Activated CD4-positive, alpha-beta memory T cell treated with anti-CD3 and anti-CD28 coated beads for 36 hours (primary cell): ENCODE measurements at regions of chr16 and their contacts with region 1.

Region 1: DNA sequence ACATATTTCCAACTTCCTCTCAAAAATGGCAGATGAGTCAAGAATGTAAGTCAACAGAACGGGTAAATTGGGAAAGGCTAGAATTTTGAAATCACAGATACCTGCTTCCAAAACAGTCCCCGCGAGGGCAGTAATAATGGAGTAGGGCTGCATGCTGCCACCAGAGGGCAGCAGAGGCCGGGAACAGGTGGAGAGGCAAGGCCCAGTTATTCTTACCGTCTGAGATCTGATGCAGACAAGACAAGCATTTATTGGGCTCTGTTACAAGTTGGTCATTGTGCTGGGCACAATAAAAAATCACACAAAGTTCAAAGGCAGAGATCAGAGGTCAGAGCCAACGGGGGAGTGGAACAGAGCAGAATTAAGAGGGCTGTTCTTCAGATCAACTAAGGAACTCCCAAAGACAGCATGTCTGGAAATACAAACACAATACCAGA is 8.8 kb upstream of the MLKL start:
- DNase-seq: peak; percentile 88
- H3K4me3 Mint-ChIP-seq: no peak overlapping the region
- H3K27ac Mint-ChIP-seq: peak overlapping the region; percentile 2
- H3K4me1 Mint-ChIP-seq: peaks cover 10% of the 10 kb centered on the region
- H3K27me3 Mint-ChIP-seq: no peaks in the 10 kb centered on the region

Region 2: DNA sequence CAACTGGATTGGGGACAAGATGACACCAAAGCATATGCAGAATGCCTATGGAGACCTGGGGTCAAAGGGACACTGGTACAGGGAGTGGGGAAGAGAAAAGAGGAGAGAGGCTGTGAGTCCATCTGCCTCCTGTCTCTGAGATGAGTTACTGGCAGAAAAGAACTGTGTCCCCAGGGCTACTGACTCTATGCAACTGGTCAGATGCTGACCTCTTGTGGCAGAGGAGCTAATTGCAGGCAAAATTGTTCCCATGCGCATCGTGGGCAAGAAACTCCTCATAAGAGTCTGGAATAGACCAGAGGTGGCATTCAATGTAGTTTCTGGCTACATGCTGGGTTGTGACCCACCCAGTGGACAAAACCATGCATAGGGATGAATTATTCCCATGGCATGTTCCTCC is 17.3 kb after region 1 on chr16:
- CTCF ChIA-PET with region 1: interaction called, 47 read pairs
- POLR2A ChIA-PET with region 1: no interaction called
- intact Hi-C with region 1: loop called (anchors 1 kb)
- DNase-seq: peak; percentile 65
- H3K4me3 Mint-ChIP-seq: no peak overlapping the region
- H3K27ac Mint-ChIP-seq: no peak overlapping the region
- H3K4me1 Mint-ChIP-seq: peaks cover 6% of the 10 kb centered on the region
- H3K27me3 Mint-ChIP-seq: peaks cover 3% of the 10 kb centered on the region

Region 3: DNA sequence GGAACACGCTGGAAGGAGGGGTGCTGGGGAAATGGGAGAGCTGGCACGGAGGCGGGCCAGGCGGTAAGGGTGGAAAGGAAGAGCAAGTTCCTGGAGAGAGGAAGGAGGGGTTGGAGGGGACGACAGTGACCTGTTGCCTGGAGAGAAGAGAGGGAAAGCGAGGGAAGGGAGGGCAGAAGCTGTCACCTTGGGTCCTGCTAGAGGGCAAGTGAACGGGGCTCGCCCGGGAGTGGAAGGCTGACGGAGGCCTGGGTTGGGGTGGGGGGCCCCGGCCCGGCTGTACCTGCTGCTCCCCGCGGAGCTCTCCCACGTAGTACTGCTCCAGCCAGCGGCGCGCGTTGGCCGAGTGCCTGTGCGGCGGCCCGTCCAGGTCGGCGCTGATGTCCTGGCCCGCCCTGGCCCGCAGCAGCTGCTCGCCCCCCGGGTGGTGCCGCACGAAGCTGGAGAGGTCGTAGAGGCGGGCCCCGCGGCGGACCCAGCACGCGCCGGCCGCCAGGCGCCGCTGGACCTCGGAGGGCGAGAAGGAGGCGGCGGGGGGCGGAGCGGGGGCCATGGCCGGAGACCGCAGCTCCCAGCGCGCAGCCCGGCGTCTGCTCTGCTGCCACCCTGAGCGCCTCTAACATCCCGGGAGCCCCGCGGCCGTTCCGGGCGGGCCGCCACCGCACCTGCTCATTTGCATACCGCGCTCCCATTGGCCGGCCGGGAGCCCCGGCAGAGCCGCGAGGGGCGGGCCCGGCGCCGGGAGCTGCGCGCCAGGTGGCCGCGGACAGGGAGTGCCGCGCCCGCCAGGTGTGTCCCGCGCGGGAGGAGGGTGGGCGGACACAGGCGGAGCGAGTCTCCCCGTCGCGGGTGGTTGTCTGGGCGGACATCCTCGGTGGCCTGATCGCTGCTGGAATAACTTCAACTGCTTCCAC is 65.0 kb after region 1 on chr16 and contains the start of gene FA2H:
- CTCF ChIA-PET with region 1: interaction called, 4 read pairs
- POLR2A ChIA-PET with region 1: no interaction called
- intact Hi-C with region 1: loop called (anchors 1 kb)
- DNase-seq: peak; percentile 81
- H3K4me3 Mint-ChIP-seq: peak within 1 kb of the TSS; percentile 17
- H3K27ac Mint-ChIP-seq: no peak within 1 kb of the TSS
- H3K4me1 Mint-ChIP-seq: peaks cover 11% of the 10 kb centered on the region
- H3K27me3 Mint-ChIP-seq: peaks cover 31% of the 10 kb centered on the region
- total RNA-seq, gene FA2H: 0.22 TPM in 1 of 2 experiments, not detected in the other

Region 4: GRCh38 chr16:74862741-74863244 is 153.3 kb after region 1 on chr16:
- CTCF ChIA-PET with region 1: interaction called, 56 read pairs
- POLR2A ChIA-PET with region 1: interaction called, 3 read pairs
- intact Hi-C with region 1: loop called (anchors 1 kb)
- DNase-seq: peak; percentile 29
- H3K4me3 Mint-ChIP-seq: no peak overlapping the region
- H3K27ac Mint-ChIP-seq: no peak overlapping the region
- H3K4me1 Mint-ChIP-seq: peaks cover 4% of the 10 kb centered on the region
- H3K27me3 Mint-ChIP-seq: no peaks in the 10 kb centered on the region

Region 5: GRCh38 chr16:74984535-74985296 is 275.3 kb after region 1 on chr16 and contains the start of gene WDR59:
- CTCF ChIA-PET with region 1: no interaction called
- POLR2A ChIA-PET with region 1: no interaction called
- intact Hi-C with region 1: loop called (anchors 10 kb)
- DNase-seq: peak; percentile 99
- H3K4me3 Mint-ChIP-seq: peak within 1 kb of the TSS; percentile 86
- H3K27ac Mint-ChIP-seq: peak within 1 kb of the TSS; percentile 74
- H3K4me1 Mint-ChIP-seq: peaks cover 19% of the 10 kb centered on the region
- H3K27me3 Mint-ChIP-seq: no peaks in the 10 kb centered on the region
- total RNA-seq, gene WDR59: 63.5 to 65.7 TPM